ENCODE measurements at regions of chr4 and their contacts with region 1.

Region 1: DNA sequence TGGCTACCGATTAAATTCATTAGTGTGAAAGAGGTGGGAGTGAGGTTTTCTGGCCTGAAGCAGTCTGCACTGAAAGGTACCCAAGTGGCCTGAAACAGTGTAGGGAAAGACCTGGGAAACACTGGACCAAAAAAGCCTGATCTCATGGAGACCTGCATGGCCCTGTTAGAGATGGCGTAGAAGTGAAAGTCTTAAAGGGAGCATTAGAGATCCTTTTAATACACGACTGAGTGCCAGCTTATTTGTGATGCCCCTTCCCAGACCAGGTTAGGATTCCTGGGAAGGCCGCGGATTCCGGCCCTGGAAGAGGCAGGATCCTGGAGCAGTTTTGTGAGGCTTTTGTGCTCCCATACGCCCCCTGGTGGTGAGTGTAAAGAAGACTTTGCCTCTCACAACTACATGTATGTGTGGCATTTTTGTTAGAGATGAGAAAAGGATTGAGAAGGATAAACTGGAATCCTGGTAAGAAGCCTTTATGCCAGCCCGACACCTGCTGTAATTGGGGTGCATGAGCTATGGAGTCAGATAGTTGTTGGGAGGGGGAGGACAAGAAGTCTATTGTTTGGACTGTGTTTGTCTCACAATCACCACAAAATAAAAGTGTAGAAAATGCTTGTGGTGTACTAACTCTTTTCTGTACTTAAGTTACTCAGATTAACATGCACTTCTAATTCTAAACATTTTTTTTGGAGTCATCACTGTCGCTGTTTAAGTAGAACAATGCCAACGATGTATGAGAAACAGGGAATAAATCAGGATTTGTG is 54.0 kb downstream of the JADE1 start:
- DNase-seq: peak; percentile 37 to 74 (median 60)
- ATAC-seq: peak; percentile 73
- H3K4me3 ChIP-seq: no peak overlapping the region
- H3K4me3 Mint-ChIP-seq: peak overlapping the region in 5 of 10 donors; percentile 2 to 55 (median 17)
- H3K27ac ChIP-seq: peak overlapping the region; percentile 58
- H3K27ac Mint-ChIP-seq: peak overlapping the region in 8 of 9 donors; percentile 59 to 91 (median 82)
- H3K4me1 ChIP-seq: peaks cover 21 to 22% of the 10 kb centered on the region in 2 donors
- H3K4me1 Mint-ChIP-seq: peaks cover 20 to 49% (median 45%) of the 10 kb centered on the region in 7 donors
- H3K27me3 ChIP-seq: no peaks in the 10 kb centered on the region
- H3K27me3 Mint-ChIP-seq: no peaks in the 10 kb centered on the region

Region 2: GRCh38 chr4:128454281-128455075 is 409.0 kb before region 1 on chr4:
- CTCF ChIA-PET with region 1: interaction called, 7 read pairs
- POLR2A ChIA-PET with region 1: no interaction called
- intact Hi-C with region 1: loop called (anchors 1 kb)
- DNase-seq: peak; percentile 16 to 68 (median 49)
- ATAC-seq: peak; percentile 92
- H3K4me3 ChIP-seq: no peak overlapping the region
- H3K4me3 Mint-ChIP-seq: no peak overlapping the region
- H3K27ac ChIP-seq: no peak overlapping the region
- H3K27ac Mint-ChIP-seq: peak overlapping the region in 1 of 9 donors; percentile 47
- H3K4me1 ChIP-seq: no peaks in the 10 kb centered on the region
- H3K4me1 Mint-ChIP-seq: peaks cover 0 to 11% (median 0%) of the 10 kb centered on the region in 7 donors
- H3K27me3 ChIP-seq: no peaks in the 10 kb centered on the region
- H3K27me3 Mint-ChIP-seq: no peaks in the 10 kb centered on the region

Region 3: GRCh38 chr4:128565565-128566186 is 297.8 kb before region 1 on chr4:
- CTCF ChIA-PET with region 1: no interaction called
- POLR2A ChIA-PET with region 1: no interaction called
- intact Hi-C with region 1: loop called in 1 of 2 experiments (anchors 1 kb)
- DNase-seq: peak in 1 of 9 donors; percentile 12
- ATAC-seq: no peak
- H3K4me3 ChIP-seq: no peak overlapping the region
- H3K4me3 Mint-ChIP-seq: no peak overlapping the region
- H3K27ac ChIP-seq: no peak overlapping the region
- H3K27ac Mint-ChIP-seq: peak overlapping the region in 1 of 9 donors; percentile 26
- H3K4me1 ChIP-seq: no peaks in the 10 kb centered on the region
- H3K4me1 Mint-ChIP-seq: no peaks in the 10 kb centered on the region
- H3K27me3 ChIP-seq: no peaks in the 10 kb centered on the region
- H3K27me3 Mint-ChIP-seq: peaks cover 4 to 28% (median 21%) of the 10 kb centered on the region in 5 donors

Region 4: GRCh38 chr4:128574706-128575105 is 288.8 kb before region 1 on chr4:
- CTCF ChIA-PET with region 1: interaction called, 3 read pairs
- POLR2A ChIA-PET with region 1: no interaction called
- intact Hi-C with region 1: loop called (anchors 1 kb)
- DNase-seq: peak; percentile 16 to 64 (median 51)
- ATAC-seq: peak; percentile 67
- H3K4me3 ChIP-seq: no peak overlapping the region
- H3K4me3 Mint-ChIP-seq: no peak overlapping the region
- H3K27ac ChIP-seq: no peak overlapping the region
- H3K27ac Mint-ChIP-seq: no peak overlapping the region
- H3K4me1 ChIP-seq: no peaks in the 10 kb centered on the region
- H3K4me1 Mint-ChIP-seq: no peaks in the 10 kb centered on the region
- H3K27me3 ChIP-seq: no peaks in the 10 kb centered on the region
- H3K27me3 Mint-ChIP-seq: peaks cover 0 to 16% (median 12%) of the 10 kb centered on the region in 5 donors

Region 5: DNA sequence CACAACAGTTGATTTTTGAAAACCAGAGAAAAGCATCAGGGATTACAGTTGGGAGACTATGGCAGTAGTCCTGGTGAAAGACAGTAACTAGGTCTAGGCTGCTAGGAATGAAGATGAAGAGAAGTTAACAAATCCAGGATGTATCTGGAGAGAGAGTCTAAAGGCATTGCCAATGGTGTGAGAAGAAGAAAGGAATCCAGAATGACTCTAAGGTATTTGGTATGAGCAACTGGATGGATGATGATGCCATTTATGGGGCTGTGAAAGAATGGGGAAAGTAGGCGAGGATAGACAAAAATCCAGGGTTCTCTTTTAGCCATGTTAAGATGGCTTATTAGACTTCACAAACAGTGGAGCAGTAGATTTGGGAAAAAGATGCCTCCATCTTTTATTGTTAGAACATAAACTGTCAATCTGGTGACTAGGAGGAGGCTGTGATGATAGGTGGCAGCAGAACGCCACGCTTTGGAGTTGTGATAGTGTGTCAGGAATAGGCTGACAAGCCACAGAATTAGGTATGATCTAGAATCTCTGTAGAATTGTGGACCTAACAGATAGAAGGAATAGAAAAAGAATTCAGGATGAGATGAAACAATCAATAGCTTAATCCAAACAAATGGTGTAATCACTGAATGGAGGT is 81.3 kb before region 1 on chr4:
- CTCF ChIA-PET with region 1: interaction called, 12 read pairs
- POLR2A ChIA-PET with region 1: interaction called, 3 read pairs
- intact Hi-C with region 1: loop called (anchors 1 kb)
- DNase-seq: peak in 8 of 9 donors; percentile 11 to 66 (median 58)
- ATAC-seq: peak; percentile 77
- H3K4me3 ChIP-seq: no peak overlapping the region
- H3K4me3 Mint-ChIP-seq: no peak overlapping the region
- H3K27ac ChIP-seq: no peak overlapping the region
- H3K27ac Mint-ChIP-seq: no peak overlapping the region
- H3K4me1 ChIP-seq: no peaks in the 10 kb centered on the region
- H3K4me1 Mint-ChIP-seq: no peaks in the 10 kb centered on the region
- H3K27me3 ChIP-seq: no peaks in the 10 kb centered on the region
- H3K27me3 Mint-ChIP-seq: peaks cover 0 to 8% (median 4%) of the 10 kb centered on the region in 5 donors

Region 6: DNA sequence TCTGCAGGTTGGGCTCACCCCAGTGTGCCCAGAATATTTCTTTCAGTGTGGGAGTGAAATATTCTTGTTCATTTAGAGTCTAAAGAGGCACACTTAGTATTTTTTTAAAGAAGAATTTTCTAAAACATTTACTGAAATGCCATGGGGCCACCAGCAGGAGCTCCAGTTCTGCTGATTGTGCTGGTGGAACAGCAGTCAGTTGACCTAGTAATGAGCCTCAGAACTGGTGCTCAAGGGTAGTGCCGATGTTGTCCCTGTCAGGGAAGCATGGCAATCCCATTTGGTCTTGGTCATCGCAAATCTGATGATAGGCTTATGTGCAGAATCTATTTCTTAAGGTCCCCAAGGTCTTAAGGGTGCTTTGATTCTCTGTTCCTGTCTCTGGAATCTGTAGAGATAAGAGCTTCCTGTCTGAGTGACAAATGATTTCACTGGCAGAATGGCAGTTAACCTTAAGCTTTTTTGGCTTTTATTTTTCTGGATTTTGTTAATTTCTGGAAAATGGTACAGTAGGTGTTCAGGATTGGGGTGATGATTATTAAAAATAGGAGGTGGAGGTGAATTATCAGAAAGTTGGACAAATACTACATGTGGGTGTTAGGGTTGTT is 22.7 kb before region 1 on chr4:
- CTCF ChIA-PET with region 1: interaction called, 3 read pairs
- POLR2A ChIA-PET with region 1: no interaction called
- intact Hi-C with region 1: loop called in 1 of 2 experiments (anchors 2 kb)
- DNase-seq: peak in 1 of 9 donors; percentile 14
- ATAC-seq: peak; percentile 36
- H3K4me3 ChIP-seq: no peak overlapping the region
- H3K4me3 Mint-ChIP-seq: peak overlapping the region in 5 of 10 donors; percentile 12 to 41 (median 32)
- H3K27ac ChIP-seq: no peak overlapping the region
- H3K27ac Mint-ChIP-seq: peak overlapping the region; percentile 47 to 88 (median 74)
- H3K4me1 ChIP-seq: peaks cover 15 to 26% of the 10 kb centered on the region in 2 donors
- H3K4me1 Mint-ChIP-seq: peaks cover 39 to 80% (median 69%) of the 10 kb centered on the region in 7 donors
- H3K27me3 ChIP-seq: no peaks in the 10 kb centered on the region
- H3K27me3 Mint-ChIP-seq: no peaks in the 10 kb centered on the region

Measured in naive thymus-derived CD4-positive, alpha-beta T cell (primary cell).